ENCODE measurements at regions of chr6 and their contacts with region 1.

Region 1: DNA sequence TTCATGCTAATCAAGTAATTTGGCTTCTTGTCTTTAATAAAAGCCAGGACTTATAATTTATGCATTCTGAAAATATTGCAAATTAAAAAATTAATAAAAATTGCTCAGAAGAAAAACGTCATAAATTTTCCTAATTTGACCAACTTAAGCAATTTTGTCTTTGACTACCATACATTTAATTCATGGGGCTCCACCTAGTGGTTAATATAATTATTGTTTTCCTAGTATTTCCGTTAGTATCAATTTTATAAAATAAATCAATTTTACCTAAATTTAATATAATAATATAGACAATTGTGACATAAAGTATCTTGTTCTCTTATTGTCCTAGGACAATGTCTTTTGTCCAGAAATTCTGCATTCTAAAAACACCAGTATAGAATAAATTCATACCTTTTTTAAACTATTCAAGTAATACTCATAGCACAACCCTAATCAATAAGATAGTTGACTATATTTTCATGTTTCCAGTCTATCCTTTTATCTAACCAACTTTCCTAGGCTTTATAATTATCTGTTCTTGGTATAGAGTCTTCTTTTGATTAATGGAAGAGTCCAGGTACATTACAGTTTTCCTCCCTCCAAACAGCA is 319.9 kb downstream of the TRDN start:
- DNase-seq: no peak
- ATAC-seq: no peak

Region 2: DNA sequence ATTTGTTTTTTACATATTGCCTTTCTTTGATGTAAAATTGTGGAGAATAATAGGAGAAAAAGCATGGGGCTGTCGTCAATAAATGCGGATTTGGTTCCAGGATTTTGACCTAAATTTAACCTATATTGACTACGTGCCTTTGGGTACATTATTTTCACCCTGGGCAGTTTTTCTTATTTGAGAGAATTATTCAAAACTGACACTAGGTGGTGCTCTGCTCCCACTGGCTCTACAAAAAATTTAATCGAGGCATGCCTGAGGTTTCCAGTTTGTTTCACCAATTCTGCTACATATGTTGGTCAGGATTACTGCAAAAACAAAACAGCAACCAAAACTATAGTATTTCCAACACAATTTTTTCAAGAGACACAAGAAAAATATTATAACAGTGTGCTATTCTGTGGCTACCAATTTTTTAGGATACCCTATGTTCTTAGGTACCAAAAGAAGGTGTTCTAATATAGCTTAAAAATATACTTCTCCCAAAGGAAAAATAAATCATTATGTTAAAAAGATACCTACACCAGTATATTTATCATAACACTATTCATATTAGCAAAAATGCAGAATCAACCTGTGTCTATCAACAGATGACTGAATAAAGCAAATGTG is 585.9 kb before region 1 on chr6:
- intact Hi-C with region 1: loop called in 1 of 2 experiments (anchors 10 kb)
- DNase-seq: no peak
- ATAC-seq: peak; percentile 59

Region 3: DNA sequence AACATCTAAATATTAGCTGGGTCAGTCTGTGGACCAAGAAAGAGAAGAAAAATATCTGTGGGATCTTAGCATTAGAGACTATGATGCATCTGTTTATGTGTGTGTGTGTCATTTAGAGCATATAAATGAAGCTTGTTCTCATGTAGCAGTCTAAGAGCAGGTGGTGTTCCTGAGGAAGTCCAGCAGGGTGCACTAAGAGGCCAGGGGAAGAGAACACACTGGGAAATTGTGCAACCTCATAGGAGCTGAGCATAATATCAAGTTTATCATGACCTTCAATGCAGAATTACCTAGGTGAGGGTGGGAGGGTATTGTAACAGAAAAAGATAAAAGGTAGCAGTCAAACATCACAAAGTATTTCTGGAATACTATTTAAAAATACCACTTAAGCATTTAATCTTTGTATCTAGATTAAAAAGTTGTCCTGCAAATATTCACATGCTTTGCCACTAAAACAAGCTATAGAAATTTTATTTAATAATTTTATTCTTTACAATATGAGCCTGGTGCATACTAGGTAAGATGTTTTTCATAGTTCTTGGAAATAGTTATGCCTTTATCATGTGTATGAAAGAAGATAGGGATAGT is 447.3 kb before region 1 on chr6:
- intact Hi-C with region 1: loop called in 1 of 2 experiments (anchors 5 kb)
- DNase-seq: peak in 1 of 2 donors; percentile 7
- ATAC-seq: peak; percentile 92

Region 4: GRCh38 chr6:123430970-123431369 is 114.1 kb after region 1 on chr6:
- intact Hi-C with region 1: no loop called
- DNase-seq: no peak
- ATAC-seq: no peak